WTC11 (cell line): ENCODE measurements at regions of chr15 and their contacts with region 1.

Region 1: GRCh38 chr15:85840065-85840801 is 45.5 kb upstream of the KLHL25 start:
- DNase-seq: peak; percentile 93
- ATAC-seq: peak; percentile 93
- H3K4me3 Mint-ChIP-seq: peak overlapping the region; percentile 62
- H3K27ac Mint-ChIP-seq: no peak overlapping the region
- H3K4me1 Mint-ChIP-seq: peaks cover 20% of the 10 kb centered on the region
- H3K27me3 Mint-ChIP-seq: peaks cover 18% of the 10 kb centered on the region
- CTCF ChIP-seq: peak; percentile 59

Region 2: DNA sequence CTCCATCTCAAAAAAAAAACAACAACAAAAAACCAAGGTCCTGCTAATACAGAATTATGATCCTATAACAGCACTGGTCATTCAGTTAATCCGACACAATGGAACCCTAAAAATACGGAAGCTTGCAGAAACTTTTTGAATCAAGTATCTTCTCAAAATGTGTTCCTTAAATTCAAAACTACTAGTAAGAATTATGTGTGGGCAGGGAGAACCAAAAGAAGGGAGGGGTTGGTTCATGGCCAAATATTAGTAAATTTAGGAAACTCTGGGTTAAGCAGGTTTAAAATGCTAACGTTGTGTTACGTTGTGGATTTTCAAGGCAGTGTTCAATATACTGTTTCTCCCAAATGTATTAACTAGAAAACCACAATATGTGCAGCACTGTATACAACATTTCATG is 161.0 kb before region 1 on chr15:
- CTCF ChIA-PET with region 1: no interaction called
- POLR2A ChIA-PET with region 1: no interaction called
- DNase-seq: no peak
- ATAC-seq: no peak
- H3K4me3 Mint-ChIP-seq: no peak overlapping the region
- H3K27ac Mint-ChIP-seq: no peak overlapping the region
- H3K4me1 Mint-ChIP-seq: no peaks in the 10 kb centered on the region
- H3K27me3 Mint-ChIP-seq: no peaks in the 10 kb centered on the region
- CTCF ChIP-seq: no peak

Region 3: GRCh38 chr15:85730001-85730820 is 110.0 kb before region 1 on chr15:
- CTCF ChIA-PET with region 1: interaction called, 28 read pairs
- POLR2A ChIA-PET with region 1: no interaction called
- DNase-seq: no peak
- ATAC-seq: peak; percentile 87
- H3K4me3 Mint-ChIP-seq: no peak overlapping the region
- H3K27ac Mint-ChIP-seq: peak overlapping the region; percentile 5; the same call in 1 of the 2 replicates
- H3K4me1 Mint-ChIP-seq: no peaks in the 10 kb centered on the region
- H3K27me3 Mint-ChIP-seq: peaks cover 2% of the 10 kb centered on the region
- CTCF ChIP-seq: no peak

Region 4: DNA sequence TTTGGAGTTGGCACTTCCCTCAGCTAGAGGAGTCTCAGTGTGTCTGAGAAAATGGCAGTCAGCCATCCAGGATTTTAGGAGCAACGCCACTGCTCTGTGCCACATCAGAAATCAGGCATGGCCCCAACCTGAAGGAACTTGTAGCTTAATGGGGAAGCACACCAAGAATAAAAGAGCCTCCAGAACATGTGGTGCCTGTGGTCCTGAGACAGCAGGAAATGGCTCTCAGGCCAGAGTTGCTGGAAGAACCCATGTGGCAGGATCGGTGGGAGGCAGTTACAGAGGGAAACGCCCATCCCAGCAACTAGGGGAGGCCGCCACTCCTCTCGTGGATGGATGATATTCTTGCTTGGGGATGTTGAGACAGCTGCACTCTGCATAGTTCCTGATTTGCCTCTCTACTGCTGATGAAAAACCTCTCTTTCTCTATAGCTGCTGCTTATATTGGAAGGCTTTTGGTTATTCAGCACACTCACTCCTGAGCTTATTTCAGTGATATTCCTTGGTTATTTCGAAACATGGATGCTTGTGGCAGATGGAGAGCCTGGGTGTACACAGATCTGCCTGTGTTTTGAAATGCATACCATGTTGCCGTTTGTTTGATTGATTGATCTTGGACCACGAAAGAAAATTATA is 97.9 kb before region 1 on chr15:
- CTCF ChIA-PET with region 1: interaction called, 14 read pairs
- POLR2A ChIA-PET with region 1: no interaction called
- DNase-seq: no peak
- ATAC-seq: peak; percentile 38
- H3K4me3 Mint-ChIP-seq: no peak overlapping the region
- H3K27ac Mint-ChIP-seq: no peak overlapping the region; the same call in 1 of the 2 replicates
- H3K4me1 Mint-ChIP-seq: peaks cover 19% of the 10 kb centered on the region
- H3K27me3 Mint-ChIP-seq: no peaks in the 10 kb centered on the region
- CTCF ChIP-seq: no peak

Region 5: GRCh38 chr15:85750319-85750806 is 89.9 kb before region 1 on chr15:
- CTCF ChIA-PET with region 1: interaction called, 16 read pairs
- POLR2A ChIA-PET with region 1: no interaction called
- DNase-seq: no peak
- ATAC-seq: peak; percentile 1; the same call in 1 of the 2 replicates
- H3K4me3 Mint-ChIP-seq: peak overlapping the region; percentile 26
- H3K27ac Mint-ChIP-seq: peak overlapping the region; percentile 79
- H3K4me1 Mint-ChIP-seq: peaks cover 74% of the 10 kb centered on the region
- H3K27me3 Mint-ChIP-seq: no peaks in the 10 kb centered on the region
- CTCF ChIP-seq: no peak

Region 6: DNA sequence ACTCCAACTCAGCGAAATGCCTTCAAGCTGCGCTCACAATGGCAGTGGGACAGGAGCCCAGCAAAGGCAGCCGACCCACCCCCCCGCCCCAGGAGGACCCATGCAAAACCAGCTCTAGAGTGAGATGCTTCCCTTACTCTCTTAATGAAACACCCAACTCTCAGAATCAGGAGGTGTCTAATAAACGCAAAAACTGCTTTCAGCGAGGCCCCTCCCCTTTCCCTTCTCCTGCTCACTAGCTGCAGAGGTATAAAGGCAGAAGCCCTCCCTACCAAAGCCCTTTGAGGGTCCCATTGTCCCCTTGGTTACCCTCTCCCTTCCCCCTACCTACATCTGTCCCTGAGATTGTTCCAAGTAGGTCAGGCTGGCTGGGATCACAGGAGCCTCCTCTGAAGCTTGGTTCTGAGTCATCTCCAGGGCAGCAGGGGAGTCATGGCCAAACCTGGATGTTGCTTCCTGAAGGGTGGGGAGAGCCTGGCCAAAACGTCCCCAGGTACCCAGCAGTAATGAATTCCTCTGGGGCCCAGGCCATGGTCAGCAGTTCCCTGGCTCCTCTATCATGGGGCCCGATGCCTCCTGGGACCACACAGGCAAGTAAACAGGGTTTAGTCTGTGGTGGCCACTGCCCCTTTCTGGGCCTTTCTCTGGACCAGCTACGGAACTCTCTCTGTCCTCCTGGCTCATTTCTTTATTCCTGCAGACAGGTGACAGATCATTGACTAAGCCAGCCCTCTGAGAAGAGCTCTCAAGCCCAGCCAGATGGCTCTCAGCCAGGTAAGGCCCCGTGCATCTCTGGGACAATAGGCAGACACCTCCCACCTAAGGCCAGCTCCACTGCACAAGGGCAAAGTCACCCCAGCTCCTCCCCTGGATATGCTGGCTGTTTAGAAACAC is 54.1 kb before region 1 on chr15:
- CTCF ChIA-PET with region 1: interaction called, 15 read pairs
- POLR2A ChIA-PET with region 1: interaction called, 11 read pairs
- DNase-seq: no peak
- ATAC-seq: peak; percentile 53
- H3K4me3 Mint-ChIP-seq: no peak overlapping the region
- H3K27ac Mint-ChIP-seq: peak overlapping the region; percentile 21
- H3K4me1 Mint-ChIP-seq: peaks cover 62% of the 10 kb centered on the region
- H3K27me3 Mint-ChIP-seq: no peaks in the 10 kb centered on the region
- CTCF ChIP-seq: no peak

Region 7: DNA sequence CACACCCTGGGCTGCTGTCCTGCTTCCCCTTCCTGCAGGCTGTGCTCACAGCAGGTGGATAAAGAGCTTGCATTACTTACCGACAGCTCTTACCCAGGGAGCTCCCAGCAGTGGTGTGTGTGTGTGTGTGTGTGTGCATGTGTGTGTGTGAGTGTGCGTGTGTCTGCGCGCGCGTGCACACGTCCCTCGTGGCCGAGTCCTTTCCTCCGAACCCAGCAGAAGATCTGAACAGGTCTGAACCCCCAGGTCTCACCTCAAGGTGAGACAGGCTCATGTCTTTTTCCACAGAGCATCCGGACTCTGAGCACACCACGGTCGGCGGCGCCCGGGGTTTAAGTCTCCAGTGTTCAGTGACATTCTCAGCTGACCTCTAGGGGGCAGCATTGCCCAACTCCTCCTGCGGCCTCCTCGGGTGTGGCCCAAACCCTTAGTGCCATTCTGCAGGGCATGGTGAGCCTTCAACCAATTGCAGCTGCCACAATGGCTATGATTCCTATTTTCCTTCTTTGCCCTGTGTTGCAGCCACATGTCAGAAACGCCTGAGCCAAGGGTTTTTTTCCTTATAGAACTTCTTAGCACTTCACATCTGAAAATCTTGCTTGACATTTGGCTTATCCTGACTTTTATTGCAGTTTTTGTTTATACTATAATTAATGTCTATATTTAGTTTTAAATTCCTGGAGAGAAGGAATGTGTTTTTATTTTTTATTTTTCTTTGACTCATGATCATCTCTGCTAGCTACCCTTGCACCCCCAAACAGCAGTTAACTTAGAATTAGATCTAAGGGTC is 18.5 kb after region 1 on chr15:
- CTCF ChIA-PET with region 1: interaction called, 14 read pairs
- POLR2A ChIA-PET with region 1: no interaction called
- DNase-seq: peak; percentile 85
- ATAC-seq: peak; percentile 90
- H3K4me3 Mint-ChIP-seq: peak overlapping the region; percentile 67
- H3K27ac Mint-ChIP-seq: no peak overlapping the region
- H3K4me1 Mint-ChIP-seq: peaks cover 25% of the 10 kb centered on the region
- H3K27me3 Mint-ChIP-seq: no peaks in the 10 kb centered on the region; the same call in 1 of the 2 replicates
- CTCF ChIP-seq: peak; percentile 84